Breast epithelium (tissue), 4 donors: ENCODE measurements at regions of chr13 and their contacts with region 1.

Region 1: GRCh38 chr13:80284290-80284689 is 56.6 kb downstream of the SPRY2 start:
- DNase-seq: no peak
- H3K4me3 ChIP-seq: no peak overlapping the region
- H3K27ac ChIP-seq: no peak overlapping the region
- H3K4me1 ChIP-seq: no peaks in the 10 kb centered on the region
- H3K27me3 ChIP-seq: no peaks in the 10 kb centered on the region
- CTCF ChIP-seq: no peak
- POLR2A ChIP-seq: no peak

Region 2: GRCh38 chr13:80204642-80205041 is 79.6 kb before region 1 on chr13:
- intact Hi-C with region 1: no loop called
- DNase-seq: no peak
- H3K4me3 ChIP-seq: no peak overlapping the region
- H3K27ac ChIP-seq: no peak overlapping the region
- H3K4me1 ChIP-seq: no peaks in the 10 kb centered on the region
- H3K27me3 ChIP-seq: no peaks in the 10 kb centered on the region
- CTCF ChIP-seq: no peak
- POLR2A ChIP-seq: no peak

Region 3: DNA sequence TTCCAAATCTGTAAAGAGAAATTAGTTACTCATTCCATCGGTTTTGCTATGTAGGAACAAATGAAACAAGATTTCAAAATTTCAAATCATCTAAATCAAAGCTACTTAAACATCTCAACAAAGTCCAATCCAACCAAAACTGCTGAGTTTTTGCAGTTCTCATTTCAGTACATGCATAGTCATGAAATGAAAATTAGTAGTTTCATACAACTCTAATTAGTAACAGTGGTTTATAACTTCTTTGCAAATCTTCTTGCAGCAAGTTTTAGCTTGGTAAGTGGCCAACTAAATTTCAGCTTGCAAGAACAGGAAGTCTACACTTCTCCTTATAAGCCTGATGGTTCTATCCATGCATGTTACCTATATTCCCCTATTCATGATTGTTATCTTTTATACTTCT is 18.9 kb before region 1 on chr13:
- intact Hi-C with region 1: loop called (anchors 1 kb)
- DNase-seq: no peak
- H3K4me3 ChIP-seq: no peak overlapping the region
- H3K27ac ChIP-seq: no peak overlapping the region
- H3K4me1 ChIP-seq: no peaks in the 10 kb centered on the region
- H3K27me3 ChIP-seq: no peaks in the 10 kb centered on the region
- CTCF ChIP-seq: no peak
- POLR2A ChIP-seq: no peak

Region 4: GRCh38 chr13:80297094-80297493 is 12.8 kb after region 1 on chr13:
- intact Hi-C with region 1: no loop called
- DNase-seq: no peak
- H3K4me3 ChIP-seq: no peak overlapping the region
- H3K27ac ChIP-seq: no peak overlapping the region
- H3K4me1 ChIP-seq: no peaks in the 10 kb centered on the region
- H3K27me3 ChIP-seq: no peaks in the 10 kb centered on the region
- CTCF ChIP-seq: no peak
- POLR2A ChIP-seq: no peak

Region 5: DNA sequence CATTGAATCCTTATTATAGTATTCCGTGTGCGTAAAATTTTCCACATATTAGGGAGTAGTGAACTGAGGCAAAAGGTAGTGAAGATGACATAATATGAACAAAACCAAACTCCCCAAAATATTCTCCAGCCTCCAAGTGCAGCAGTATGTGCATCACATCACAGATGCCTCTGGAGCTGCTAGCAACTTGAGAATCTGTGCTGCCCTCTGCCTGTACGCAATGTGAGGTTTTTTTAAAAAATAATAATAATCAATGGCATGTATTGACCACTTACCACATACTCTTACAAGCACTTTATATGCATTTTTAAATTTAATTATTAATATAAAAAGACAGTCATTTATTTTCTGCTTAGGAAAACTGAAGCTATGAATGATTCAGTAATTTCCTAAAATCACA is 639.6 kb after region 1 on chr13:
- intact Hi-C with region 1: no loop called
- DNase-seq: no peak
- H3K4me3 ChIP-seq: no peak overlapping the region
- H3K27ac ChIP-seq: no peak overlapping the region
- H3K4me1 ChIP-seq: no peaks in the 10 kb centered on the region
- H3K27me3 ChIP-seq: no peaks in the 10 kb centered on the region
- CTCF ChIP-seq: no peak
- POLR2A ChIP-seq: no peak

Region 6: DNA sequence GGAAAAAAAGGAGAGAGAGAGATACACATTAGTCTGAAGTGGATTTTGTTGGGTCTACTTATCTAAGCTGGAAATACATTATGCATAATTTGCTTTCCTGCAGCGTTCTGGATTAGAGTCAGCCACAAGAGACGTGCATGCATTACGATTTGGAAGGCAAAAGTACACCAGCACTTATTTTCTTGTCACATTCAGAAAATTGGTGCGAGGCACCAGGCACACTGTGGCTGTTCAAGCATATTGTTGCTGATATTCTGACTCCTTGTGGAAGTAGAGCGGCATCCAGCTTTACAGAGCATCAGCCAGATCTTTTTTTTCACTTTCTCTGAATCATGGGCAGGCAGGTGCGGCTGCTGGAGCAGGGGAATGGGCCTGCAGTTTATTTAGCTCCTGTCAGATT is 962.3 kb after region 1 on chr13:
- intact Hi-C with region 1: no loop called
- DNase-seq: no peak
- H3K4me3 ChIP-seq: no peak overlapping the region
- H3K27ac ChIP-seq: no peak overlapping the region
- H3K4me1 ChIP-seq: no peaks in the 10 kb centered on the region
- H3K27me3 ChIP-seq: no peaks in the 10 kb centered on the region
- CTCF ChIP-seq: no peak
- POLR2A ChIP-seq: no peak